MCF 10A (cell line): ENCODE measurements at regions of chr18 and their contacts with region 1.

Region 1: GRCh38 chr18:26804519-26804918 is 61.0 kb downstream of the AQP4 start:
- DNase-seq: no peak
- H3K4me3 Mint-ChIP-seq: no peak overlapping the region
- H3K27ac Mint-ChIP-seq: no peak overlapping the region
- H3K4me1 Mint-ChIP-seq: no peaks in the 10 kb centered on the region
- H3K27me3 Mint-ChIP-seq: no peaks in the 10 kb centered on the region
- CTCF ChIP-seq: peak; percentile 10

Region 2: DNA sequence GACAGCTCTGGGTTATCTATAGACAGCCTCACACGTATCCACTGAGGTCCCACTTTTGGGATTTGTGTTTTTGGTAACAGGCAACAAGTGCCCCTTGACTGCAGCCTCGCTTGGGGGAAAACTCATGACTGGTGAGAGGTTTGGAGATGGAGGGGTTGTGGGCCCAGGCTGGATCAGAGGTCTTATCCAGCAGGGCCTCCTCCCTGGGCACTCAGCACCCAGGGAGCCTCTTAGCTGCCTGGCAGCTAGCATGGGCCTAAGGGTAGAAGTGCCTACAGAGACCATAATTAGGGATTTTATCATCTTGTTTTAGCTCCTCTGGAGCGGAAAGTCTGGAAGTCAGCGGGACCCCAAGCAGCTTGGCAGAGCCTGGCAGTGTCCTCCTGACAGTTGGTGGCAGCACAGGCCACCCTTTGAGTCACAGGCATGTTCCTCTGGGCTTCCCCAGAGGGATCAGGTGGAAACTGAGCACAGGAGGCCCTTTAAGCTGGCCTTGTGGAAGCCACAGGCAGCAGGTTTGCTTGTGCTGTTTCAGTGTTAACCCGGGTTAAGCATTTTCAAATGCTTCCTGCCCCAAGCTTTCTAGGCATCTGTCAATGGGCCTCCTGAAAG is 399.2 kb before region 1 on chr18:
- CTCF ChIA-PET with region 1: no interaction called
- POLR2A ChIA-PET with region 1: no interaction called
- intact Hi-C with region 1: loop called (anchors 1 kb)
- DNase-seq: peak; percentile 64
- H3K4me3 Mint-ChIP-seq: no peak overlapping the region
- H3K27ac Mint-ChIP-seq: no peak overlapping the region
- H3K4me1 Mint-ChIP-seq: peaks cover 11% of the 10 kb centered on the region
- H3K27me3 Mint-ChIP-seq: no peaks in the 10 kb centered on the region
- CTCF ChIP-seq: peak; percentile 57

Region 3: DNA sequence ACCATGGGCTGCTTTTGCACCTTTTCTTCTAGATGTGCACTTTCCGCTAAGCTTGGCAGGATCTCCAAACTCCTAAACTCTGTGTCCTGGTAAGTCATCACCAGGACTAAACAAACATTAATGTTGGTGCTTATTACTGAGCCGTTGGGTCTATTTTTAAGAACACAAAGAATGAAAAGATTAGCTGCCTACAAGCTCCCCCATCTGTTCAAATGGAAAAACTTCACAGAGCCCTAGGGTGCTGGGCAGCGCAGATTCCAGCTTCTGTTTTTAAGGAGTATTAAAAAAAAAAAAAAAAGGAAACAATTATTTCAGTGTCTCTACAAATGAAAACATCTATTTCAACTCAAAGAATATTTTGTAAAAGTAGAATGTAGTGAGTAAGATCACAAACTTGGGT is 158.8 kb after region 1 on chr18:
- CTCF ChIA-PET with region 1: interaction called, 10 read pairs
- POLR2A ChIA-PET with region 1: no interaction called
- intact Hi-C with region 1: loop called (anchors 2 kb)
- DNase-seq: peak; percentile 33
- H3K4me3 Mint-ChIP-seq: no peak overlapping the region
- H3K27ac Mint-ChIP-seq: no peak overlapping the region
- H3K4me1 Mint-ChIP-seq: no peaks in the 10 kb centered on the region
- H3K27me3 Mint-ChIP-seq: no peaks in the 10 kb centered on the region
- CTCF ChIP-seq: peak; percentile 37